Activated B cell treated with CpG ODN at 0.5 μM for 24 hours (primary cell): ENCODE measurements at regions of chr6 and their contacts with region 1.

Region 1: DNA sequence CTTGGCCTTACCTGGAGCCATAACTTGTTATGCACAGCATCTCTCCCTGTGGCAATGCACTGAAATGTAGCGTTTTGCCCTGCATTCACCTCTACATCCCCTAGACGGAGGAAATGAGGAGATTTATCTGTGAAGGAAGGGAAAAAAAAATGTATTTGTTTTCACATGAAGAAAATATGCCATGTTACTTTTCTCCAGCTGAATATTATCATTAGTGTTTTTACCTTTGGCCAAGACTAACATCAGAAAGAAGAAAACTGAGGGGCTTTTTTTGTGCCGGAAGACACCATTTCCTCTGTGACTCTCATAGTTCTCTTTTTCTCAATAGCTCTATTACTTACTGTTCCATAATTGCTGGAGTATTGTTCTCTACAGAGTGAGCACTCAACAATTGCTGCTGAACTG is 280.4 kb downstream of the PTPRK start:
- DNase-seq: no peak
- ATAC-seq: peak; percentile 66
- H3K4me3 Mint-ChIP-seq: peak overlapping the region; percentile 84
- H3K27ac Mint-ChIP-seq: peak overlapping the region; percentile 94
- H3K4me1 Mint-ChIP-seq: peaks cover 41% of the 10 kb centered on the region
- H3K27me3 Mint-ChIP-seq: no peaks in the 10 kb centered on the region
- CTCF ChIP-seq: no peak

Region 2: DNA sequence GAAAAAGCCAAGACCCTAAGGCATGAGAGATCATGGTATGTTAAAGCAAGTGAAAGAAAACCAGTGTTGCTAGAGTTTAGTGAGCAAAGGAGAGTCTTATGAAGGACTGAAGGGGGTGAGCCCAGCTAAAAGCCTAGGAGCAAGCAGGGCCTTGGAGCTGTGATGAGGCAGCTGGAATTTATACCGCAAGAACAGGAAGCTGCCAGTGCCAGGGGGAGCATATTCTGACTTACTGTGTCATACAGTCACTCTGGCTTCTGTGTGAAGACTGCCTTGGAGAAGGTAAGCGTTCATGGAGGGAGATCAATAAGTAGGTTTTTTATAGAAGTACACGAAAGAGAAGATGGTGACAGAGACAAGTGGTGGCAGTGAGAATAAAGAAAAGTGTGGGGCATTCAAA is 30.3 kb before region 1 on chr6:
- CTCF ChIA-PET with region 1: no interaction called
- POLR2A ChIA-PET with region 1: interaction called, 15 read pairs
- intact Hi-C with region 1: no loop called
- DNase-seq: no peak
- ATAC-seq: no peak
- H3K4me3 Mint-ChIP-seq: no peak overlapping the region
- H3K27ac Mint-ChIP-seq: no peak overlapping the region
- H3K4me1 Mint-ChIP-seq: peaks cover 3% of the 10 kb centered on the region
- H3K27me3 Mint-ChIP-seq: no peaks in the 10 kb centered on the region
- CTCF ChIP-seq: no peak

Region 3: DNA sequence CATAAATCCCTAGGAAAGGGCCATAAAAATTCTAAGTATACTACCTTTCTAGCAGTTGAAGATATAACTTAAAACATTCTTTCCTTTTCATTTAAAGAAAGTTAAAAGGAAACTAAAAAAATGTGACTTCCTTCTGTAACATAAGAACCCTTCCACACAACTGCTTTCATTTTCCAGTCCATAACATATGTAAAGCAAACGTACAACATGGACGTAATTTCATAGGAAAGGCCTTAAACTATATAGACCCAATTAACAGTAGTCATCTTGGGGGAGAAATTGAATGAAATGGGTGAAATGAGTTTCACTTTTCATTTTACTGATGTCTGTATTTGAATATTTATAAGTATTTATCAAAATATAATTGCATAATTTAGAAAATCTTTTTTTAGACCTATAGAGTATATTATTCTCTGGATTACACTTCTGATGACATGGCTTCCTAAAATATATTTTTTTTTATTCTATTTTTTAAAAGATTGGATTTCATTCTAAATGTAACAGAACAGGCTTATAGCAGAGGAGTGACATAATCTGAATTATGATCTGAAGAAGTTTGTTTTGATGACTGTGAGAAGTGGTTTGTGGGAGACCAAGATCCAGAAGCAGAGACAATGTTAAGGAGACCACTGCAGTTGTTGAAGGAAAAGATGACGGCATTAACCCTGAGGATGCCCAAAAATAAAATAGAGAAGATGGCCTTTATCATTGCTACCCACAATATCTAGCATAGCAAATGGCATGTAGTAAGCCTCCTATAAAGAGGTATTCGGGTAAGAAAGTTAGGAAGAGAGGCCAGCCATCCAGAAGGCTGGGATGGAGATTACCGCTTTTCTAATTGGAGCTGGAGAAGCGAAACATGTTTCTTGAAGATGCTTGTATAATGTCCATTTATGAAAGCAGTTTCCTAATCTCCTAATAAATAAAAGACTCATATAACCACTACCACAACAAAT is 20.0 kb after region 1 on chr6:
- CTCF ChIA-PET with region 1: no interaction called
- POLR2A ChIA-PET with region 1: interaction called, 4 read pairs
- intact Hi-C with region 1: loop called (anchors 2 kb)
- DNase-seq: no peak
- ATAC-seq: no peak
- H3K4me3 Mint-ChIP-seq: peak overlapping the region; percentile 72
- H3K27ac Mint-ChIP-seq: no peak overlapping the region
- H3K4me1 Mint-ChIP-seq: peaks cover 20% of the 10 kb centered on the region
- H3K27me3 Mint-ChIP-seq: no peaks in the 10 kb centered on the region
- CTCF ChIP-seq: no peak

Region 4: GRCh38 chr6:128807577-128807976 is 567.6 kb after region 1 on chr6:
- CTCF ChIA-PET with region 1: no interaction called
- POLR2A ChIA-PET with region 1: no interaction called
- intact Hi-C with region 1: no loop called
- DNase-seq: no peak
- ATAC-seq: no peak
- H3K4me3 Mint-ChIP-seq: no peak overlapping the region
- H3K27ac Mint-ChIP-seq: no peak overlapping the region
- H3K4me1 Mint-ChIP-seq: no peaks in the 10 kb centered on the region
- H3K27me3 Mint-ChIP-seq: no peaks in the 10 kb centered on the region
- CTCF ChIP-seq: no peak

Region 5: GRCh38 chr6:129353067-129353466 is 1113.0 kb after region 1 on chr6:
- CTCF ChIA-PET with region 1: no interaction called
- POLR2A ChIA-PET with region 1: no interaction called
- intact Hi-C with region 1: no loop called
- DNase-seq: no peak
- ATAC-seq: no peak
- H3K4me3 Mint-ChIP-seq: no peak overlapping the region
- H3K27ac Mint-ChIP-seq: no peak overlapping the region
- H3K4me1 Mint-ChIP-seq: no peaks in the 10 kb centered on the region
- H3K27me3 Mint-ChIP-seq: peaks cover 7% of the 10 kb centered on the region
- CTCF ChIP-seq: no peak